GM18951 (cell line): ENCODE measurements at regions of chr20 and their contacts with region 1.

Region 1: GRCh38 chr20:39264506-39265172 is 302.5 kb downstream of the DHX35 start:
- POLR2A ChIP-seq: no peak

Region 2: DNA sequence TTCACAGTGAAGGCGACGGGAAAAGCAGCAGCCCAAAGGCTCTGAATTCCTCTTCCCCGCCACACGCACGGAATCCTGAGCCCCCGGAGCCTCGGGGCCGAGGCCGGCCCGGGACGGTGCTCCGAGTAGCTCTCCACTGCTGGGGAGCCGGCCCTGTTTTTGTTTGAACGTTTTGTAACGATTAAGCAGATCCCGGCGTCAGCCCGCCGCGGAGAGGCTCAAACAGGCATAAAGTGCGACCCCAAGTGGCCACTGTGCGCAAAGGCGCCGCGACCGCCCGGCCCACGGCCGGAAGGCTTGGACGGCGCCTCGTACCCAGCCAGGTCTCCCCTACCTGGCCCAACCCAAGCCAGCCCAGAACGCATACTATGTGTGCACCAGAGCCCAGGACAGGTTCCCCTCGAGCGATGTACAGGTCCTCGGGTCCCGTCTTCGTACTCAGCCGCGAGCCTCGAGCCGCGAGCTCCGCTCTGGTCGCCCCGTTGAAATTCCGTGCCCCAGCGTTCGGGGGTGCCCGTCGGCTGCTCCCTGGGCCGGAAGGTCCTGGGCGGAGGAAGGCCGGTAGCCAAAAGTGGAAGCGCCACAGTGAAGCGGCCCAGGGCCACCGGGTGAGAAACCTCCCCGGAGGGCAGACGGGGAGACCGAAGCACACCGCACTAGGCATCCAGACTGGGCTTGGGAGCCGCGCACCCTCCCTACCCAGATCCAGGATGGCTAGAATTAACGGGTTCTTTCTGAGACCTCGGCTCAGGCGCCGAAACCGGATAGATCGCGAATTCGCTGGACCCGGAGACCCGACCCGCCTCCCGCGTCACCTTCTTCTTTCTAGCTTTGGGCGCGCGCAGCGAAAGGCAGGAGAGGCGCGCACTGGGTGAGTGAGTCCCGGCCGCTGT is 1425.5 kb after region 1 on chr20:
- in situ Hi-C with region 1: loop called (anchors 25 kb)
- POLR2A ChIP-seq: no peak